ENCODE measurements at regions of chr6 and their contacts with region 1.

Region 1: DNA sequence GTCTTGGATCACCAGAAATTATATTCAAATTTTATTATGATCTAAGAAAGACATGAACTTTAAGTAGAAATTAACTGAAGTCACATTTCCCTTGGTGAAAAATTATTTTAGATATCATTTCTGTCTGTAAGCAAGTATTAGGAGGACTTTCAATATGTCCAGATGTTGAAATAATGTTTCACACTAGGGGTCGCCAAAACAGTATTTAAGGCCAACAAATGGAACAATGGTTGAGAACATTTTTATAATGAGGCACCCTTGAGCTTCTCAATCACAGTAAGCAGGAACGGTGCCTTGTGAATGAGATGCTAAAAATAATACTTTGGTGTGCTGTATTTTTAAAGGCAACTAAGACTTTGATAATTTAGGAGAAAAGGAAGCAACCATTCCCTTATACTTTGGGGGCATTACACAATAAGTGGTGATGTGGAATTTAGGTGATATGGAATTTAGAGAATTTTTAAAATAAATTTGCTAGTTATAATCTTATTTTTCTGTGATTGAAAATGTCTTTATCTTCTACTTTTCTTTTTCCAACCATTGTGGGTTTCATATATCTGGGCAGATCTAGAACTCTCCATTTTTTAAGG is 9.6 kb upstream of the SF3B5 start:
- DNase-seq: no peak
- ATAC-seq: peak in 1 of 2 donors; percentile 69
- H3K4me3 ChIP-seq: no peak overlapping the region
- H3K27ac ChIP-seq: no peak overlapping the region
- H3K4me1 ChIP-seq: no peaks in the 10 kb centered on the region
- H3K27me3 ChIP-seq: no peaks in the 10 kb centered on the region
- CTCF ChIP-seq: peak; percentile 37 to 59 (median 53)
- POLR2A ChIP-seq: no peak

Region 2: DNA sequence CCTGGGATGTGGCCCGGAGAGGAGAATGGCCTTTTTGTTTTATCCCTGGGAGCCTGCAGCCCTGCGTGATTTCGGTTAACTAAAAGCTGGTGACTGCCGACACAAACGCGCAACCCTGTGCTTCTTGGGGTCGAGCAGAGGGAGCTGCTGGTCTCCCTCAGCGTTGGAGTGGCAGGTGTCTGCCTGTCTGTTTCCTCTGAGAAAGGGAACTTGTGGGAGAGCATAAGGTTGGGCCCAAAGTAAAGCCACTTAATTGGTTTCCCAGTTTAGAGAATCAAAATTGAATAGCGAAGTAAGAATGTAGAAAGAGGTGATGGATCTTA is 261.4 kb before region 1 on chr6:
- in situ Hi-C with region 1: no loop called
- intact Hi-C with region 1: no loop called
- DNase-seq: no peak
- ATAC-seq: peak; percentile 1 to 6
- H3K4me3 ChIP-seq: peak overlapping the region; percentile 71 to 89 (median 84)
- H3K27ac ChIP-seq: peak overlapping the region; percentile 85 to 94 (median 89)
- H3K4me1 ChIP-seq: peaks cover 9 to 14% of the 10 kb centered on the region in 2 donors
- H3K27me3 ChIP-seq: no peaks in the 10 kb centered on the region
- CTCF ChIP-seq: no peak
- POLR2A ChIP-seq: no peak

Region 3: GRCh38 chr6:144149891-144150709 is 45.1 kb after region 1 on chr6 and contains the start of gene STX11:
- in situ Hi-C with region 1: no loop called
- intact Hi-C with region 1: loop called (anchors 5 kb)
- DNase-seq: peak; percentile 19 to 27
- ATAC-seq: peak; percentile 45 to 60
- H3K4me3 ChIP-seq: peak within 1 kb of the TSS; percentile 62 to 81 (median 70)
- H3K27ac ChIP-seq: peak within 1 kb of the TSS; percentile 10 to 72 (median 64)
- H3K4me1 ChIP-seq: peaks cover 2 to 4% of the 10 kb centered on the region in 2 donors
- H3K27me3 ChIP-seq: peaks cover 8 to 21% (median 8%) of the 10 kb centered on the region in 3 donors
- CTCF ChIP-seq: no peak
- POLR2A ChIP-seq: peak; percentile 62 to 75
- total RNA-seq, gene STX11: 2.0 to 5.2 (median 4.3) TPM

Region 4: DNA sequence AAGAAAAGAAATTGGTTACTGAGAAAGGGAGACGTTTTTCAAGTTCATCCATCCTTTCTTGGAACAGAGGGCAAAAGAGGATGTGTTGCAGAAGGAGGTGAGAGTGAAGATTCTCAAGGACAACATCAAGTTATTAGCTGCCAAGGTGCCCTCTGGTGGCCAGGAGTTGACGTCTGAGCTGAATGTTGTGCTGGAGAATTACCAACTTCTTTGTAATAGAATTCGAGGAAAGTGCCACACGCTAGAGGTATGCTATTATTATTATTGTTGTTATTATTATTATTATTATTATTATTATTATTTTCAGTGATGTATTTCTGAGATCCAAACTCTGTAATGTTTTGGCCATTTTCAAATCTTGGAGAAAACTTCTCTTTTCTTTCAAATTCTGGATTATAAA is 377.1 kb after region 1 on chr6:
- in situ Hi-C with region 1: loop called (anchors 5 to 10 kb)
- intact Hi-C with region 1: loop called (anchors 2 kb)
- DNase-seq: peak; percentile 43 to 68
- ATAC-seq: peak; percentile 37 to 44
- H3K4me3 ChIP-seq: no peak overlapping the region
- H3K27ac ChIP-seq: no peak overlapping the region
- H3K4me1 ChIP-seq: peaks cover 25 to 35% of the 10 kb centered on the region in 2 donors
- H3K27me3 ChIP-seq: no peaks in the 10 kb centered on the region
- CTCF ChIP-seq: peak; percentile 34 to 72 (median 45)
- POLR2A ChIP-seq: no peak